Calu3 (cell line): ENCODE measurements at regions of chr7 and their contacts with region 1.

Region 1: DNA sequence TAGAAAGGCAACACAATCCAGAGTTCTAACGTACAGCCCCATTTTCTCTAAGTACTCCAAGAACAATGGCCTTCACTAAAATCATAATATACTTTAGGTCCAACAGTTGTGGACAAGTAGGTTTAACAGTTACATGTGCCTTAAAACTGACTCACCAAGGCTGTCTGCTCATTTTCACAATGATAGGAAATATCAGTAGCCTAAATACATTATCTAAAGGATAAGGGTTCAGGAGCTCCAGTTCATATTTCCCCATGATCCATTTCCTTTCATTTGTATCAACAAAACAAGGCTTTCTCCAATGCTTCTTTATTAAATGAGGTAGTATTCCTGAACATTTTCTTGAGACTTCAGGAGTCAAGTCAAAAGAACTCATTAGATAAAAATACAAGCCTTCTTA is 164.0 kb downstream of the SLC25A13 start:
- DNase-seq: no peak
- H3K4me3 Mint-ChIP-seq: no peak overlapping the region
- H3K27ac Mint-ChIP-seq: no peak overlapping the region
- H3K4me1 Mint-ChIP-seq: no peaks in the 10 kb centered on the region
- H3K27me3 Mint-ChIP-seq: no peaks in the 10 kb centered on the region
- CTCF ChIP-seq: no peak

Region 2: DNA sequence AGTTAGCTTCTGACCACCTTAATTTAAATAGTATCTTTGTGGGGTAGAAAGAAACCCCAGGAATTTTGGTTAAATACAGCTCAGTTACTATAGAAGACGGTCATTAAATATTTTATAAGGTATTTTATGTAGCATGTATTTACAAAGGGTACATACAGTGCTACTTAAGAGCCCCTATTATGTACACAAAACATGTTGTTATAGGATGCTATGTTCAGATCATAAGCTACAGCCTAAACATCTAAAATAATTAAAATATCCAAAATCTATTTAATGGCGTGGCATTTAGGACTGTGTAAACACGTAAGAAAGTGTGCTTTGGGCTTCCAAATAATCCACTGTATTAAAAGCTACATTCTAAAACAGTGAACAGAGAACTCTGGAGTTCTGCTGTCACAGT is 906.2 kb after region 1 on chr7:
- CTCF ChIA-PET with region 1: interaction called, 15 read pairs
- intact Hi-C with region 1: no loop called
- DNase-seq: no peak
- H3K4me3 Mint-ChIP-seq: no peak overlapping the region
- H3K27ac Mint-ChIP-seq: no peak overlapping the region
- H3K4me1 Mint-ChIP-seq: no peaks in the 10 kb centered on the region
- H3K27me3 Mint-ChIP-seq: peaks cover 20% of the 10 kb centered on the region
- CTCF ChIP-seq: no peak